Ascending aorta (tissue), 2 donors: ENCODE measurements at regions of chr3 and their contacts with region 1.

Region 1: DNA sequence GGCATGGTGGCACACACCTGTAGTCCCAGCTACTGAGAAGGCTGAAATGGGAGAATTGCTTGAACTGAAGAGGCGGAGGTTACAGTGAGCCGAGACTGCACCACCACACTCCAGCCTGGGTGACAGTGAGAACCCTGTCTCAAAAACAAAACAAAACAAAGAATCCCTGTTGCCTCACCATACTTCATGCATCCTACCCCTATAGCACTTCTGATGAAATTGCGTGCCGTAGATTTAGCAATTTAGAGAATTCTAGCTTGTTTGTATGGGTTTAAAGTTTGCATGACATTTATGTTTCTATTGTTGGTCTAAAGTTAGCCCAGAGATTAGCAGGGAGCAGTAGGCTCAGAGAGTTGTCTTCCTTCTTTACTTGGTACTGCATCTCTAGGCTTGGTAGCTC is 7.8 kb downstream of the RAB5A start:
- DNase-seq: no peak
- H3K4me3 ChIP-seq: no peak overlapping the region
- H3K27ac ChIP-seq: no peak overlapping the region
- H3K4me1 ChIP-seq: peaks cover 0 to 14% of the 10 kb centered on the region in 2 donors
- H3K27me3 ChIP-seq: no peaks in the 10 kb centered on the region
- CTCF ChIP-seq: no peak

Region 2: GRCh38 chr3:20013396-20013795 is 58.7 kb after region 1 on chr3:
- intact Hi-C with region 1: no loop called
- DNase-seq: no peak
- H3K4me3 ChIP-seq: no peak overlapping the region
- H3K27ac ChIP-seq: no peak overlapping the region
- H3K4me1 ChIP-seq: no peaks in the 10 kb centered on the region
- H3K27me3 ChIP-seq: no peaks in the 10 kb centered on the region
- CTCF ChIP-seq: no peak

Region 3: DNA sequence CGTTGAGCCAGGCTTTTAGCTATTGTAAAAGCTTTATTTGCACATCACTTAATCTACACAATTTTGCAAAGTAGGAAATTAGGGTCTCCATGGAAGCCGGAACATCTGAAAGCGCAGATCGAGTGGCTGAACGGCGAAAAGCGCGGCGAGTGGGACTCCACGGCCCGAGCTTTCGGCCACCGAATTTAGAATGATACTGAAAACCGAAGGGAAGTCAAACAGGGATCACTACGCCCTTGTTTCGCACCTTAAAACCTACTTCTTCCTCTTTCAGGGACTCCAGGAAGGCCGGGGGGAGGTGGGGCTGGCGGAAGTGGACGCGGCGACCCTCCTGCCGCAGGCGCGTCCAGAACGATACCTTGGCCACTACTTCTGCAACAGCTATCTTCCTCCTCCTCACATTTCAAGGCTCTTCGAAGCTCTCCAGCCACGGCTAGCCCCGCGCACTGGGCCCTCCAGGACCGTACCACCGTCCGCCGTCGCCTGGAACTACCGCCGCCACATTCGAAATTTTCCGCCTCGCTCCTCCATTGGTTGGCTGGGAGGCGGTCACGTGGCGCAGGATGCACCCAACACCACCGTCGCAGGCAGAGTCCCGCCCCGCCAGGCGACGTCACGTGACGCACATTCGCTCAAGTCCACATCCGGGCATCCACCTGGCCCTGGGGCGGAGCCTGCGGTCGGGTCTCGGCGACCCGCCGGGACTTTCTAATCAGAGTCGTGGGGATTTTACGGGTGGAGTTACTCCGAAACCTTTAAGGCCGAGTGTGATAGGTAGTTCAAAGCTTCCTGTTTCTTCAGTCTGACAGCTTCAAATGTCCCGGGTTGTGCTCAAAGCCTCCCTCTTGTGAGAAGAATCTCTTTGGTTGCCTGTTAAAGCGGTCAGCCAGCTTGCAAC is 231.3 kb after region 1 on chr3 and contains the start of gene SGO1:
- intact Hi-C with region 1: loop called (anchors 5 kb)
- DNase-seq: peak; percentile 99 to 100
- H3K4me3 ChIP-seq: peak within 1 kb of the TSS; percentile 70 to 85
- H3K27ac ChIP-seq: peak within 1 kb of the TSS; percentile 91 to 94
- H3K4me1 ChIP-seq: peaks cover 0 to 6% of the 10 kb centered on the region in 2 donors
- H3K27me3 ChIP-seq: no peaks in the 10 kb centered on the region
- CTCF ChIP-seq: no peak
- total RNA-seq, gene SGO1: not detected